ENCODE measurements at regions of chr12 and their contacts with region 1.

Region 1: DNA sequence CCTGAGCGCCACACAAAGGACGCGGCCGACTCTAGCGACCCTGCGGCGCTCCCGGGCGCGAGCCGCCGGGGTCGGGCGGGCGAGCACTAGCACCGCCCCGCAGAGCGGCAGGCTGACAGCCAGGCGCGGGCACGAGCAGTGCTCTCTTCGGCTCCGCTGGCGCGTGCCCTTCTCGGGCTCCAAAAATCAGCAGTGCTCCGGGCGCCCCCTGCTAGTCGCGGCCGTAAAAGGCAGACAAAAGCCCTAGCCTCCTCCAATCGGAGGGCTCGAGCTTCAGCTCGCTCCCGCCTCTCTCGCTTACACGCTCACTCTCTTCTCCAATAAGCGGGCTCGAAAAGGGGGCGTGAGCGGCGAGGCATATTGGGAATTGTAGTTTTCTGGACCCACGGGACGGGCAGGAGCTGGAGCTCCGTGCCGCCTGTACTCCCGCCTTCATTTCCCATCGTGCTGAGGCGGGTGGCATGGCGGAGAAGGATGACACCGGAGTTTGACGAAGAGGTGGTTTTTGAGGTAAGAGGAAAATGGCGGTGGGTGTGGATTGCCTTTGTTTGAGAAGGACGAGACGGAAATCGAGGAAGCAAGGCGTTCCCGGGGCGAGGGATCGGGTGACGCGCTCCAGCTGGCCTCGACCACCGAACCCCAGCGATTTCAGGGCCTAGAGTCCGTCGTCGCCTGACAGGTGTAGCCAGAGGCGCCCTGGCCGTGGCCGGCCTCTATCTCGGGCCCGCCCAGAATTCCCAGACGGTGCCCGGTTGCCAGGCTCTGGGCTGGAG is at the starts of genes FGD6 and VEZT:
- DNase-seq: peak; percentile 99
- ATAC-seq: peak; percentile 90
- H3K4me3 ChIP-seq: peak within 1 kb of the TSS; percentile 62 to 97 (median 94)
- H3K4me3 Mint-ChIP-seq: peak within 1 kb of the TSS; percentile 95
- H3K27ac ChIP-seq: peak within 1 kb of the TSS; percentile 88 to 92
- H3K27ac Mint-ChIP-seq: peak within 1 kb of the TSS; percentile 96
- H3K4me1 ChIP-seq: peaks cover 11% of the 10 kb centered on the region in 2 donors
- H3K4me1 Mint-ChIP-seq: peaks cover 38% of the 10 kb centered on the region
- H3K27me3 ChIP-seq: no peaks in the 10 kb centered on the region
- H3K27me3 Mint-ChIP-seq: no peaks in the 10 kb centered on the region
- CTCF ChIP-seq: peak; percentile 69
- total RNA-seq, gene FGD6: 7.3 and 8.4 TPM in 2 replicates
- total RNA-seq, gene VEZT: 61.8 and 69.3 TPM in 2 replicates

Region 2: DNA sequence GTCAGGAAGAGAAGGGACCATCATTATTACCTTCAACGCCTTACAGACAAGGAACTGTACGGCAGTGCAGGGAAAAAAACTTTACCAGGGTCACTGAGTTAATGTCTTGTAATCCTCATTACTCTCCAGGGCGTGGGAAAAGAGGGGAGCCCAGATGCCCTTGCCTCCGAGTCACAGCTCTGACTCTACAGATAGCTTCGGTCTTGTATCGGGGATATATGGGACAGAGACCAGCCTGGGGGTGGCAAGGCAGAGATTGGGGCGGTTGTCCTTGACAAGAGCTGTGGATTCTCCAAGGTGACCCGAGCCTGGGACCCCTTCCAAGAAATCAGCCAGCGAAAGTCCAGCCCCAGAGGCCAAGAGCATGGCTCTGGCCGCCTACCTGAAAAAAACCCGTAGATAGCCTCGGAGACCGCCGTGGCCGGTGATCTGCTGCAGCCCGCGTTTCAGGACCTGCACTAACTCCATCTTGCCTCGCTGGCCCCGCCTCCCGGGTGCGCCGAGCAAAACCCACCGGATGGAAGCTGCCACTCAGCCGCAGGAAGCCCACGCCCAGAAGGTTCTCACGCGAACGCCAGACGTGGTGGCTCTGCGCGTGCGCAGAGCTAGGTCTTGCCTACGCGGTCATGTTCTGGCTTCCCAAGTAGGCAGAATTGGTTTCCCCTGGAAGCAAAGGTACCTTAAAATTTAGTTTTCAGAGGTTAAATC is 214.2 kb before region 1 on chr12 and contains the start of gene NDUFA12:
- CTCF ChIA-PET with region 1: no interaction called
- POLR2A ChIA-PET with region 1: no interaction called
- intact Hi-C with region 1: loop called (anchors 2 kb)
- DNase-seq: peak; percentile 96
- ATAC-seq: peak; percentile 100
- H3K4me3 ChIP-seq: peak within 1 kb of the TSS; percentile 75 to 98 (median 81)
- H3K4me3 Mint-ChIP-seq: peak within 1 kb of the TSS; percentile 98
- H3K27ac ChIP-seq: peak within 1 kb of the TSS; percentile 82
- H3K27ac Mint-ChIP-seq: peak within 1 kb of the TSS; percentile 98
- H3K4me1 ChIP-seq: peaks cover 15 to 24% of the 10 kb centered on the region in 2 donors
- H3K4me1 Mint-ChIP-seq: peaks cover 38% of the 10 kb centered on the region
- H3K27me3 ChIP-seq: no peaks in the 10 kb centered on the region
- H3K27me3 Mint-ChIP-seq: no peaks in the 10 kb centered on the region
- CTCF ChIP-seq: no peak
- total RNA-seq, gene NDUFA12: 41.7 and 42.0 TPM in 2 replicates

Region 3: GRCh38 chr12:95117178-95117599 is 100.4 kb before region 1 on chr12:
- CTCF ChIA-PET with region 1: interaction called, 35 read pairs
- POLR2A ChIA-PET with region 1: no interaction called
- intact Hi-C with region 1: loop called (anchors 1 kb)
- DNase-seq: peak; percentile 79
- ATAC-seq: peak; percentile 76
- H3K4me3 ChIP-seq: no peak overlapping the region
- H3K4me3 Mint-ChIP-seq: no peak overlapping the region
- H3K27ac ChIP-seq: no peak overlapping the region
- H3K27ac Mint-ChIP-seq: no peak overlapping the region
- H3K4me1 ChIP-seq: no peaks in the 10 kb centered on the region
- H3K4me1 Mint-ChIP-seq: no peaks in the 10 kb centered on the region
- H3K27me3 ChIP-seq: no peaks in the 10 kb centered on the region
- H3K27me3 Mint-ChIP-seq: no peaks in the 10 kb centered on the region
- CTCF ChIP-seq: peak; percentile 81

Region 4: DNA sequence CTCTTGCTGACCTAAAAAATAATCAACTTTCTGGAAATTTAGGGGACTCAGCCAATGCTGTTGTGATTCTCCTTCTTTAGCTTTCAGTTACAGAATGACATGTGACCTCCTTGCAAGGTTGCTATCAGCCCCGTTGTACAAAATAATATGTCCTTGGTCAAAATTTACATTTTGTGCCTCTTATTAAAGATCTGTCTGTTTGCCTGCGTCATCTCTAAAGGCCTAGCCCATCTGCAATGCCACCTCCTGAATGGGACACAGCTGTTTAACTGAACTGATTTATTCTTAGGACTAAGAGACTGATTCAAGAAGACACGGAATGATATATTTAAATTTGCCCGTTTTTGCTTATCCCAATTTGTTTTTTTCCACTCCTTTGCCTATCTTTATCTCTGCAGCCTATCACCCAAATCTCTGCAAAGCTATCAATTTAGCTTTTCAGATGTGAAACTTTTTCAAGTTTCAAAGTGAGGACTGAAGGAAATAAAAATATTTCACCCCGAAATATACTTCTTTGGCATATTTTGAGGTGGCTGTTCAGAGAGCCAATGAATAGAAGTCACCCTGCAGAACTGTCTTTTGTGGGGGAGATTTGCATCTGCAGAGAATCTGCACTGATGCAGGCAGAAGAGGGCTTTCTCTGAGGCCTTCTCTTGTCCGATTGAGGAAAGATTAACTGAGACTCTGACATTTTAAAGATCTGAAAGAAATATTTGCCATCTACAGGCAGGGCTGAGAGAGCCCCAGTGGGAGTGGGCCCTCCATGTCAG is 126.1 kb after region 1 on chr12:
- CTCF ChIA-PET with region 1: no interaction called
- POLR2A ChIA-PET with region 1: no interaction called
- intact Hi-C with region 1: no loop called
- DNase-seq: no peak
- ATAC-seq: no peak
- H3K4me3 ChIP-seq: no peak overlapping the region
- H3K4me3 Mint-ChIP-seq: no peak overlapping the region
- H3K27ac ChIP-seq: no peak overlapping the region
- H3K27ac Mint-ChIP-seq: no peak overlapping the region
- H3K4me1 ChIP-seq: no peaks in the 10 kb centered on the region
- H3K4me1 Mint-ChIP-seq: no peaks in the 10 kb centered on the region
- H3K27me3 ChIP-seq: peaks cover 0 to 8% (median 0%) of the 10 kb centered on the region in 4 experiments
- H3K27me3 Mint-ChIP-seq: peaks cover 11% of the 10 kb centered on the region
- CTCF ChIP-seq: no peak

Region 5: DNA sequence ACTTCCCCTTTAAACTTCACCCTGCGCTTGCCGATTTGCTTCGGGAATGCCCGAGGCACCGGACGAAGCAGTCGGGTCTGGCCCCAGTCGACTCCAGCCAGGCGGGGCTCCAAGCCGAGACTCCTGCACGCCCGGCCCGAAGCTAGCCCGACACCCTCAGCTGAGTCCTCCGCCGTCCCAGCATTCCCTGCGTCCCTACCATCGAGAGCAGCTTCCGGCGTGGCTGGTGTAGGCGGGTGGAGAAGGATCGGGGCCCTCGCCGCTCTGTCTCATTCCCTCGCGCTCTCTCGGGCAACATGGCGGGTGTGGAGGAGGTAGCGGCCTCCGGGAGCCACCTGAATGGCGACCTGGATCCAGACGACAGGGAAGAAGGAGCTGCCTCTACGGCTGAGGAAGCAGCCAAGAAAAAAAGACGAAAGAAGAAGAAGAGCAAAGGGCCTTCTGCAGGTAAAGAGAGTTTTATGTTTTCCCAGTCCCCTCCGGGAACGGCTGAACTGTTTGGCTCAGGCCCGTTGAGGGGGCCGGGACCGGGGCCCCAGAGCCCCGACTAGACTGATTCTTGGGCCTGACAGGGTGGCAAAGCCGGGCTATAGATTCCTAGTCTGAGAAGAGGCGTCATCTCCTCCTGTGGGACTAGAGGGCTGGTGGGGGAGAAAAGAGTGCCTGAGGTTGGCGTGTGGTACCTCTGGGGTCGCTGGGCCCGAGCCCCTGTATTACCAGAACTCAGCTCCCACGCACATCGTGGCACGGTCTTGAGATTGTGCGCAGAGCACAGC is 256.5 kb after region 1 on chr12 and contains the start of gene METAP2:
- CTCF ChIA-PET with region 1: no interaction called
- POLR2A ChIA-PET with region 1: interaction called, 11 read pairs
- intact Hi-C with region 1: loop called (anchors 1 kb)
- DNase-seq: peak; percentile 92
- ATAC-seq: peak; percentile 97
- H3K4me3 ChIP-seq: peak within 1 kb of the TSS; percentile 71 to 98 (median 90)
- H3K4me3 Mint-ChIP-seq: peak within 1 kb of the TSS; percentile 100
- H3K27ac ChIP-seq: peak within 1 kb of the TSS; percentile 73 to 94
- H3K27ac Mint-ChIP-seq: peak within 1 kb of the TSS; percentile 99
- H3K4me1 ChIP-seq: peaks cover 16 to 17% of the 10 kb centered on the region in 2 donors
- H3K4me1 Mint-ChIP-seq: peaks cover 47% of the 10 kb centered on the region
- H3K27me3 ChIP-seq: no peaks in the 10 kb centered on the region
- H3K27me3 Mint-ChIP-seq: peaks cover 6% of the 10 kb centered on the region
- CTCF ChIP-seq: no peak
- total RNA-seq, gene METAP2: 49.9 and 64.5 TPM in 2 replicates

Region 6: GRCh38 chr12:95858479-95859343 is 641.1 kb after region 1 on chr12 and contains the start of gene SNRPF:
- CTCF ChIA-PET with region 1: no interaction called
- POLR2A ChIA-PET with region 1: no interaction called
- intact Hi-C with region 1: loop called (anchors 2 kb)
- DNase-seq: peak; percentile 97
- ATAC-seq: peak; percentile 96
- H3K4me3 ChIP-seq: peak within 1 kb of the TSS; percentile 70 to 89 (median 76)
- H3K4me3 Mint-ChIP-seq: no peak within 1 kb of the TSS
- H3K27ac ChIP-seq: peak within 1 kb of the TSS; percentile 83 to 95
- H3K27ac Mint-ChIP-seq: peak within 1 kb of the TSS; percentile 37
- H3K4me1 ChIP-seq: peaks cover 24 to 28% of the 10 kb centered on the region in 2 donors
- H3K4me1 Mint-ChIP-seq: peaks cover 14% of the 10 kb centered on the region
- H3K27me3 ChIP-seq: peaks cover 0 to 11% (median 9%) of the 10 kb centered on the region in 4 experiments
- H3K27me3 Mint-ChIP-seq: peaks cover 9% of the 10 kb centered on the region
- CTCF ChIP-seq: peak; percentile 18
- total RNA-seq, gene SNRPF: 23.8 and 25.5 TPM in 2 replicates

Region 7: DNA sequence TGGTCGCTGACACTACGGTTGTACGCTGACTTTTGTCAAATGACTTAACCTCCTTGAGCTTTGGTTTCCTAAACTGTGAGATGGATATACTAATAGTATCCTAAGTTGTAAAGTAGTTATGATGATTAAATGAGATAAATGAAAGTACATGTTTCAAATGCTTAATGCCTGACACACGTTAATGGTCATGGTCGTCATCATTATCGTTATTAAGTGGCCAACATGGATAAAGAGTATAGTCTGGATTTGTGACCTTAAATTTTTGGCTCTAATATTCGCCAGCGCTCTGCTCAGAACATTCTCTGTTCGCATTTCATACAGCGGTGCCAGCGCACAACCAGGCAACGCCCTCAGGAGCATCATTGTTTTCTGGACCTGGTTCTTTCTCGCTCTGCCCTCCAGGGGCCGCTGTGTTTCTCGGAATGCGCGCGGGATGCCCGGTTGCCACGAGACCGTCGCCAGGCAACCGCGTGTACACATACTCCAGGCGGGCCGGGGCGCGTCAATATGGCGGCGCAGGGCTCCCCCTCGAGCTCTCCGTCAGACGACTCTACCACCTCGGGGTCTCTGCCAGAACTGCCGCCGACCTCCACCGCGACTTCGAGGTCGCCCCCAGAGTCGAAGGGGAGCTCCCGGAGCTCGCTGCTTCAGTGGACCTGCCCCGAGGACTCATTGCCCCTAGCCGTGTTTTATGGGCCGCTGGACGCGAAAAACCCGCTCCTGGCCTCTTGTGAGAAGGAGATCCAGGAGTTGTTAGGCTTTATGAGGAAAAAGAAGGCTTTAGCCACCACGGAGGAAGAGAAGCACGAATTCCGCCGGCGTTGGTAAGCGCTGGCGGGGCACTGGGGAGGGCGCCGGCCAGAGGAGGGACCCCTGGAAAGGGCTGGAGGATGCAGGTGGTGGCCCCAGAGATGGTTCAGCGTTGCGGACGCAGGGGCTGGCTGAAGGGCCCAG is 1271.8 kb after region 1 on chr12 and contains the start of gene CFAP54:
- CTCF ChIA-PET with region 1: no interaction called
- POLR2A ChIA-PET with region 1: no interaction called
- intact Hi-C with region 1: loop called (anchors 2 kb)
- DNase-seq: peak; percentile 96
- ATAC-seq: peak; percentile 91
- H3K4me3 ChIP-seq: peak within 1 kb of the TSS; percentile 35 to 75 (median 67)
- H3K4me3 Mint-ChIP-seq: peak within 1 kb of the TSS; percentile 90
- H3K27ac ChIP-seq: peak within 1 kb of the TSS in 1 of 2 donors; percentile 69
- H3K27ac Mint-ChIP-seq: peak within 1 kb of the TSS; percentile 86
- H3K4me1 ChIP-seq: peaks cover 8 to 10% of the 10 kb centered on the region in 2 donors
- H3K4me1 Mint-ChIP-seq: peaks cover 16% of the 10 kb centered on the region
- H3K27me3 ChIP-seq: peaks cover 0 to 6% (median 3%) of the 10 kb centered on the region in 4 experiments
- H3K27me3 Mint-ChIP-seq: no peaks in the 10 kb centered on the region
- CTCF ChIP-seq: peak; percentile 89
- total RNA-seq, gene CFAP54: 0.24 and 0.76 TPM in 2 replicates

Measured in B cell (primary cell).